Activated CD8-positive, alpha-beta T cell treated with anti-CD3 and anti-CD28 coated beads for 36 hours (primary cell): ENCODE measurements at regions of chr12 and their contacts with region 1.

Region 1: GRCh38 chr12:120194534-120195395 is at the start of gene GCN1:
- DNase-seq: peak; percentile 85
- ATAC-seq: peak; percentile 81
- H3K4me3 Mint-ChIP-seq: peak within 1 kb of the TSS; percentile 93
- H3K27ac Mint-ChIP-seq: peak within 1 kb of the TSS; percentile 91
- H3K4me1 Mint-ChIP-seq: peaks cover 57% of the 10 kb centered on the region
- H3K27me3 Mint-ChIP-seq: no peaks in the 10 kb centered on the region
- CTCF ChIP-seq: no peak
- total RNA-seq, gene GCN1: 130 to 137 TPM

Region 2: GRCh38 chr12:120075034-120075616 is 119.6 kb before region 1 on chr12:
- CTCF ChIA-PET with region 1: no interaction called
- POLR2A ChIA-PET with region 1: no interaction called
- intact Hi-C with region 1: no loop called
- DNase-seq: no peak
- ATAC-seq: no peak
- H3K4me3 Mint-ChIP-seq: no peak overlapping the region
- H3K27ac Mint-ChIP-seq: peak overlapping the region; percentile 60
- H3K4me1 Mint-ChIP-seq: peaks cover 22% of the 10 kb centered on the region
- H3K27me3 Mint-ChIP-seq: no peaks in the 10 kb centered on the region
- CTCF ChIP-seq: no peak

Region 3: DNA sequence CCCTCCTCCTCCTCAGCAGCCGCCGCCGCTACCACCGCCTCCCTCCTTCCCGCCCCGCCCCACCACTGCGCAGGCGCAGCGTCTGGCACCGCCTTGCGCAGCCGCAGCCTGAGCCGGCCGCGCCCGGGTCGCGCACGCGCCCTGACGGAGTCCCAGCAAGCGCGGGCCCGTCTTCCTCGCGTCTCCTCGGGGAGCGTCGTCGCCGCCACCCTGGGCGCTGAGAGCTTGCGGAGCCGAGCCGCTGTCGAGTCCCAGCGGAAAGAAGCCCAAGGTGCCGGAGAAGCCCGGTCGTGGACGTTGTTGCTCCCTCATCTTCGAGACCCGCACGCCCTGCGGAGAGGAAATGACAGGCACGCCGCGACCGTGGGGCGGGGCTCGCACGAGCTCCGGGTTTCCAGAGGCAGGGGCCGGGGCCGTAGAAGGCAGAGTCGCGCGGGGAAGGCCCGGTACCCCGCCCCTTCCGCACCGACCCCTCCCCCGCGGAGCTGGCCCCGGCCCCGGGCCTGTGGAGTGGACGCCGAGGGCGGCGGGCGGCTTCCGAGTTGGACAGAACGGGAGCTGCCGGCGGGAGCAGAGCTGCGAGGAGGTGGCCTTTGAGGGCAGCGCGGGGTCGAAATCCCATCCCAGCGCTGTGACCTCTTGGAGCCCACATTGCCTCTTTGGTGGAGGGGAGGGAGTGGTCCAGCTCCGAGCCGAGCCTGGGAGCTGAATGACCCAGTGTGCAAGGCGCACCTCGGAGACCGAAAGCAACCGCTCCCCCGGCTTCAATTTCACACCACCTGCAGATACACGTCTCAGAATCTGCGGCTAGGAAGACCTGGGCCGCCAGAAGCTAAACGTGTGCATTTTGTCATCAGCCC is 77.7 kb before region 1 on chr12:
- CTCF ChIA-PET with region 1: no interaction called
- POLR2A ChIA-PET with region 1: interaction called, 60 read pairs
- intact Hi-C with region 1: loop called (anchors 5 kb)
- DNase-seq: peak; percentile 96
- ATAC-seq: peak; percentile 83
- H3K4me3 Mint-ChIP-seq: peak overlapping the region; percentile 80
- H3K27ac Mint-ChIP-seq: peak overlapping the region; percentile 86
- H3K4me1 Mint-ChIP-seq: peaks cover 62% of the 10 kb centered on the region
- H3K27me3 Mint-ChIP-seq: no peaks in the 10 kb centered on the region
- CTCF ChIP-seq: no peak

Region 4: GRCh38 chr12:120209851-120210250 is 15.1 kb after region 1 on chr12:
- CTCF ChIA-PET with region 1: no interaction called
- POLR2A ChIA-PET with region 1: interaction called, 44 read pairs
- intact Hi-C with region 1: no loop called
- DNase-seq: no peak
- ATAC-seq: no peak
- H3K4me3 Mint-ChIP-seq: no peak overlapping the region
- H3K27ac Mint-ChIP-seq: no peak overlapping the region
- H3K4me1 Mint-ChIP-seq: no peaks in the 10 kb centered on the region
- H3K27me3 Mint-ChIP-seq: no peaks in the 10 kb centered on the region
- CTCF ChIP-seq: no peak

Region 5: GRCh38 chr12:120234643-120235368 is 40.0 kb after region 1 on chr12:
- CTCF ChIA-PET with region 1: no interaction called
- POLR2A ChIA-PET with region 1: interaction called, 139 read pairs
- intact Hi-C with region 1: no loop called
- DNase-seq: no peak
- ATAC-seq: no peak
- H3K4me3 Mint-ChIP-seq: no peak overlapping the region
- H3K27ac Mint-ChIP-seq: peak overlapping the region; percentile 13
- H3K4me1 Mint-ChIP-seq: peaks cover 70% of the 10 kb centered on the region
- H3K27me3 Mint-ChIP-seq: no peaks in the 10 kb centered on the region
- CTCF ChIP-seq: no peak

Region 6: DNA sequence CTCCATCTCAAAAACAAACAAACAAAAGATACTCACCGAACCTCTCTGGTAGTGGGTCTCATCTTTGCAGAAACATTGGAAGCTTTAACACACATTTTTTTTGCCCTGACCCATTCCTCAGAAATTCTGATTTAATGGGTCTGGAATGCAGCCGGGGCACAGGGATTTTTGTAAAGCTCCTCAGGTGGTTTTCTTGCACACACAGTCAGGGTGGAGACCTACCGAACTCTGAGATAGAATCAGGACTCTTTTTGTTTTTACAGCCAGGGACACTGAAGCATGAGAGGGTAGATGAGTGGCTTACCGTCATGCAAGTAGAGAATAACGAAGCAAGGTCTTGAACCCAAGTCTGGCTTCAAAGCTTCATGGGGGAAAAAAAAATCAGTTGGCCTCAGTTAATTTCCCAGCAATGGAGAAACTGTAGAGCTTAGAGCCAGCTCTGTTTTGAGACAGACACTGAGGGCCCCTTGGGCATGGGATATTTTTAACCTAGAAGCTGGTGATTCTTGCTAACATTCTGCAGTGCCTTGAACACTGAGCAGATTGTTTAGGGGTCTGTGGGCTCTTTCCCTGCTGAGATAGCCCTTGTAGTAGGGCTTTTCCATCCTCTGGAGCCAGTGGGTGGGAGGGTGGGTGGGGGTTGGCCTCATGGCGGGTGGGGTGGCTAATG is 92.2 kb after region 1 on chr12:
- CTCF ChIA-PET with region 1: no interaction called
- POLR2A ChIA-PET with region 1: interaction called, 263 read pairs
- intact Hi-C with region 1: no loop called
- DNase-seq: no peak
- ATAC-seq: no peak
- H3K4me3 Mint-ChIP-seq: no peak overlapping the region
- H3K27ac Mint-ChIP-seq: no peak overlapping the region
- H3K4me1 Mint-ChIP-seq: peaks cover 12% of the 10 kb centered on the region
- H3K27me3 Mint-ChIP-seq: no peaks in the 10 kb centered on the region
- CTCF ChIP-seq: no peak

Region 7: DNA sequence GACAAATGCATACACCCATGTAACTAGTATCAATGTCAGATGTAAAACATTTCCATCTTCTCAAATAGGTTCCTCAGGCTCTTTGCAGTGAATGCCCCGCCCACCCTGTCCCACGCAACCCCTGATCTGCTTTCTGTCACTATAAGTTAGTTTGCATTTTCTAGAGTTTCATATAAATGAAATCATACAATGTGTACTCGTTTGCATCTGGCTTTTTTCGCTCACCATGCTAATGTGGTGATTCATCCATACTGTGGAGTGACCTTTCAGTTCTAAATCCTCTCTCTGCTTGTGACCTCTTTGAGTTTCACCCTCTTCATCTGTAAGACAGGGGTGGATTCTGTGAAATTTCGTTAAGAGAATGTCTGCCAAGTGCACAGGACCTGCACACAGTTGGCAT is 204.8 kb after region 1 on chr12:
- CTCF ChIA-PET with region 1: no interaction called
- POLR2A ChIA-PET with region 1: no interaction called
- intact Hi-C with region 1: no loop called
- DNase-seq: peak; percentile 52
- ATAC-seq: peak; percentile 87
- H3K4me3 Mint-ChIP-seq: no peak overlapping the region
- H3K27ac Mint-ChIP-seq: no peak overlapping the region
- H3K4me1 Mint-ChIP-seq: peaks cover 5% of the 10 kb centered on the region
- H3K27me3 Mint-ChIP-seq: peaks cover 21% of the 10 kb centered on the region
- CTCF ChIP-seq: no peak

Region 8: GRCh38 chr12:120479458-120479857 is 284.7 kb after region 1 on chr12:
- CTCF ChIA-PET with region 1: no interaction called
- POLR2A ChIA-PET with region 1: no interaction called
- intact Hi-C with region 1: no loop called
- DNase-seq: no peak
- ATAC-seq: no peak
- H3K4me3 Mint-ChIP-seq: no peak overlapping the region
- H3K27ac Mint-ChIP-seq: no peak overlapping the region
- H3K4me1 Mint-ChIP-seq: peaks cover 13% of the 10 kb centered on the region
- H3K27me3 Mint-ChIP-seq: no peaks in the 10 kb centered on the region
- CTCF ChIP-seq: no peak